ENCODE measurements at regions of chr15 and their contacts with region 1.

Region 1: GRCh38 chr15:93001881-93002280 is 87.1 kb downstream of the RGMA start:
- DNase-seq: no peak
- ATAC-seq: no peak
- H3K4me3 ChIP-seq: no peak overlapping the region
- H3K27ac ChIP-seq: no peak overlapping the region
- H3K4me1 ChIP-seq: no peaks in the 10 kb centered on the region
- H3K27me3 ChIP-seq: no peaks in the 10 kb centered on the region
- CTCF ChIP-seq: no peak

Region 2: DNA sequence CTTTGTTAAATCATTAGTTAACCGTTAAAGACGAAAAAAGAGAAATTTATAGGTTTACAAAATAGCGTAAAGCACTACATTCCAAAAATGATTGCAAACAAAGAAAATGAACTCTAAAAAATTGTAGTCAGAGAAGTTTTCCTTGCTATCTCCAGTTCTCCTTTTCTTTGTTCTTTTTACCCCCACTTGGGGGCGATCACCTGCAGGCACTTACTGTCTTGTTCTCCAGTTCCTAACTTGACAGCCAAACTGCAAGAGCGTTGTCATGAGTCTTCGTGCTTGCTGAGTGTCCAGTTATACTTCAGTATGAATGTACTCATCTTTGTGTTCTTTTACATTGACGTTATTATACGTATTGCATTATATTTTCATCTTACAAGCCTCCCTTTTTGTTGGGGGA is 47.3 kb before region 1 on chr15:
- intact Hi-C with region 1: loop called in 2 of 3 experiments (anchors 10 kb)
- DNase-seq: no peak
- ATAC-seq: no peak
- H3K4me3 ChIP-seq: no peak overlapping the region
- H3K27ac ChIP-seq: no peak overlapping the region
- H3K4me1 ChIP-seq: no peaks in the 10 kb centered on the region
- H3K27me3 ChIP-seq: no peaks in the 10 kb centered on the region
- CTCF ChIP-seq: no peak

Measured in pancreas (tissue), 10 donors.